AG04449 (cell line): ENCODE measurements at regions of chr3 and their contacts with region 1.

Region 1: DNA sequence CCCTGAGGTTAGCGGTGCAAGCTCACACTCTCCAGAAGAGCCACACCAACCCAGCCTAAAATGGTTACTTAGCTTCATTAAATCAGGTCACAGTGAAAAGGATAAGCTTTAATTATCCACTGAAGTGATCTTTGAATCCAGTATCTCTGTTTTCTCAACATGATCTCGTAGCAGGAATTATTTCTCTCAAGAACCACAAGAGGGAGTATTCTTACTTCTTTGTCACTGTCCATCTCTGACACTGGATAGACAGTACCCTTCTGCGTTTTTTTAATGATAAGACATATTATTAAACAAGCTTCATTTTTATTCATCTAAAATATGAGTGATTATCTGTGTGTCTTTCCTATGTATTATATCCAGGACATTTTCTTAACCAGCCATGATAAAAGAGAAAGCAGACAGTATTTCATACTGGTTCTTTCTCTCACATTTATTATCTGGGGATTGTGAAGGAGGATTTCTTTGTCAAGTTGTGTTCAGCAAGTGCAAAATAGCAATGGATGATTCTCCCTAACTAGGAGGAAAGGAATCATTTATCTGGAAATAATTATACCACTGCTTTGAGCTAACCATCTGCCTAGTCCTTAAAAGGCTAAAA is 105.4 kb upstream of the CCDC54 start:
- DNase-seq: peak; percentile 10
- H3K4me3 ChIP-seq: no peak overlapping the region
- CTCF ChIP-seq: peak; percentile 31

Region 2: DNA sequence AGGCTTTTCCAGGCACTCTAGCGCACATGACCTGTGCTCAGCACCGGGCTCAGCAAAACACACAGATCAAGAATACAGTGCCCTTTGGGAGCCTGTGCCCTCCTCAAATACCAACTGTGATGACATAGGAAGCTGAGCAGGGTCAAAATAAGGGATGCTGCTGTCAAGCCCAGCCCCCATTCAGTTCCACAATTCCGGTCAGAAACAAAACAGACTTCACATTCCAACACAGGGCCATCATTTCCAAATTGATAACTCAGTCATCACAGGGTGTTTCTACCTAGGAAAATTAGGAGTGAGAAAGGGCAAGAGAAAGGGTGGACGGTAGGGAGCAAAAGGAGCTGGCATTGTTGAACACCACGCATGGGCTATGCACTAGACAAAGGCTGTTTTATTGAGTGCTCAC is 53.0 kb before region 1 on chr3:
- CTCF ChIA-PET with region 1: no interaction called
- POLR2A ChIA-PET with region 1: no interaction called
- DNase-seq: no peak
- H3K4me3 ChIP-seq: no peak overlapping the region
- CTCF ChIP-seq: no peak

Region 3: DNA sequence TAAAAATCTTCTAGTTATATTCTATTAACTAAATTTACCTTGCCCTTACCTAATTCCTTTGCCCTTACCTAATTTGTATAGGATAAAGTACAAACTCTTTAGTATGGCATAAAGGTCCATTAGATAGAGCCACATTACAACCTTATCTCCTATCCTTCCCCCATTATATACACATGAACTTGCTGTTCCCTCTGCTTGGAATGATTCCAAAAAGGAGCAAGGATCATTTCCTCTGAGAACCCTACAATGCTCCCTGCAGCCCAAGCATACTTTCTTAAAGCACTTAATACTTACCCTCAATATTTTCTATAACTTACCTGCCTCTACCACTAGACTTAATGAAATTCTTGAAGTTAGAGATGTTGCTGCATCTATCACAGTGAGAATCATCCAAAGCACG is 13.6 kb before region 1 on chr3:
- CTCF ChIA-PET with region 1: interaction called, 36 read pairs
- POLR2A ChIA-PET with region 1: no interaction called
- DNase-seq: no peak
- H3K4me3 ChIP-seq: no peak overlapping the region
- CTCF ChIP-seq: no peak

Region 4: GRCh38 chr3:107414325-107414964 is 142.6 kb after region 1 on chr3:
- CTCF ChIA-PET with region 1: interaction called, 161 read pairs
- POLR2A ChIA-PET with region 1: no interaction called
- DNase-seq: no peak
- H3K4me3 ChIP-seq: no peak overlapping the region
- CTCF ChIP-seq: no peak

Region 5: GRCh38 chr3:107436029-107436428 is 164.1 kb after region 1 on chr3:
- CTCF ChIA-PET with region 1: interaction called, 287 read pairs
- POLR2A ChIA-PET with region 1: no interaction called
- DNase-seq: no peak
- H3K4me3 ChIP-seq: no peak overlapping the region
- CTCF ChIP-seq: no peak

Region 6: GRCh38 chr3:107512108-107512507 is 240.2 kb after region 1 on chr3:
- CTCF ChIA-PET with region 1: interaction called, 14 read pairs
- POLR2A ChIA-PET with region 1: no interaction called
- DNase-seq: no peak
- H3K4me3 ChIP-seq: no peak overlapping the region
- CTCF ChIP-seq: no peak